ENCODE measurements at regions of chr14 and their contacts with region 1.

Region 1: GRCh38 chr14:69803753-69804152 is 6.7 kb upstream of the SLC10A1 start:
- DNase-seq: no peak
- H3K4me3 ChIP-seq: no peak overlapping the region
- H3K27ac ChIP-seq: no peak overlapping the region
- H3K4me1 ChIP-seq: no peaks in the 10 kb centered on the region
- H3K27me3 ChIP-seq: no peaks in the 10 kb centered on the region
- CTCF ChIP-seq: no peak
- POLR2A ChIP-seq: no peak

Region 2: GRCh38 chr14:70315942-70316341 is 512.2 kb after region 1 on chr14:
- intact Hi-C with region 1: loop called (anchors 10 kb)
- DNase-seq: no peak
- H3K4me3 ChIP-seq: no peak overlapping the region
- H3K27ac ChIP-seq: no peak overlapping the region
- H3K4me1 ChIP-seq: no peaks in the 10 kb centered on the region
- H3K27me3 ChIP-seq: no peaks in the 10 kb centered on the region
- CTCF ChIP-seq: no peak
- POLR2A ChIP-seq: no peak

Measured in breast epithelium (tissue), 4 donors.